PC-3 (cell line): ENCODE measurements at regions of chr1 and their contacts with region 1.

Region 1: GRCh38 chr1:234065794-234066447 is 161.4 kb downstream of the SLC35F3 start:
- DNase-seq: peak; percentile 95
- ATAC-seq: peak; percentile 48
- H3K4me3 ChIP-seq: no peak overlapping the region
- H3K27ac ChIP-seq: peak overlapping the region; percentile 53
- H3K4me1 ChIP-seq: peaks cover 43% of the 10 kb centered on the region
- H3K27me3 ChIP-seq: no peaks in the 10 kb centered on the region
- CTCF ChIP-seq: peak; percentile 95

Region 2: DNA sequence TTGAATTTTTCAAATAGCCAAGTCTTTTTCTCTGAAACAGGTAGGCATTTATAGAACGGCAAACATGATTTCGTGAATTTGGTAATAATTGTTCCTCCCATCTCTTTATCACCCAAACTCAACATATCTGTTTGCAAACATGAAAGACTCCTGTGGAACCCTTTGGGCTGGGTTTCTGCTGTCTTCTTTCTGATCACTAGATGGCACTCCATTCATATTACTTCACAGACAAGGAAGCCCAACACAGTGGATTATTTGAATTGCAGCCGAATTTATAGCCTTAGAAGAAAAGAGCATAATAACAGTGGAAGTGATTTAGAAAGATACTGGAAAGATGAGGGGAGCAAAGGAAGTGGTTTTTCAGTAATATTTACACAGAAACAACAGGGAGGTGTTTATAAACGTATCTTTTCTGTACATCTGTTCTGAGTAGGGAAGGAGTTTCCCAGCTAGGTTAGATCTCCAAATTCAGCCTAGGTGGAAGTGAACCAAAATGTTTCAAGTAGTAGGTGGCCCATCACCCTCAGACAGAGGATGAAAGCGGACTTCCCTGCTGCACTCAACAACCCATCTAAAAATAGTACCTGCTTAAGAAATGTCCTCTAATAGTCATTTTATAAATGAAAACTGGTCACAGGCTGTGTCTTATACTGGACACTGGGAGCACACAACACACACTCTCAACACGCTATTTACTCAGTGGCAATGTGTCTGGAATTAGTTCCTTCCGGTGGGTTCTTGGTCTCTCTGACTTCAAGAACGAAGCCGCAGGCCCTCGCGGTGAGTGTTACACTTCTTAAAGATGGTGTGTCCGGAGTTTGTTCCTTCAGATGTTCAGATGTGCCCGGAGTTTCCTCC is 670.8 kb before region 1 on chr1:
- CTCF ChIA-PET with region 1: no interaction called
- POLR2A ChIA-PET with region 1: no interaction called
- intact Hi-C with region 1: loop called (anchors 1 kb)
- DNase-seq: peak; percentile 90
- ATAC-seq: peak; percentile 97
- H3K4me3 ChIP-seq: no peak overlapping the region
- H3K27ac ChIP-seq: no peak overlapping the region
- H3K4me1 ChIP-seq: 0 out of 2 replicates have a peak, but pooled peaks cover 3% of the 10 kb centered on the region
- H3K27me3 ChIP-seq: no peaks in the 10 kb centered on the region
- CTCF ChIP-seq: peak; percentile 98

Region 3: DNA sequence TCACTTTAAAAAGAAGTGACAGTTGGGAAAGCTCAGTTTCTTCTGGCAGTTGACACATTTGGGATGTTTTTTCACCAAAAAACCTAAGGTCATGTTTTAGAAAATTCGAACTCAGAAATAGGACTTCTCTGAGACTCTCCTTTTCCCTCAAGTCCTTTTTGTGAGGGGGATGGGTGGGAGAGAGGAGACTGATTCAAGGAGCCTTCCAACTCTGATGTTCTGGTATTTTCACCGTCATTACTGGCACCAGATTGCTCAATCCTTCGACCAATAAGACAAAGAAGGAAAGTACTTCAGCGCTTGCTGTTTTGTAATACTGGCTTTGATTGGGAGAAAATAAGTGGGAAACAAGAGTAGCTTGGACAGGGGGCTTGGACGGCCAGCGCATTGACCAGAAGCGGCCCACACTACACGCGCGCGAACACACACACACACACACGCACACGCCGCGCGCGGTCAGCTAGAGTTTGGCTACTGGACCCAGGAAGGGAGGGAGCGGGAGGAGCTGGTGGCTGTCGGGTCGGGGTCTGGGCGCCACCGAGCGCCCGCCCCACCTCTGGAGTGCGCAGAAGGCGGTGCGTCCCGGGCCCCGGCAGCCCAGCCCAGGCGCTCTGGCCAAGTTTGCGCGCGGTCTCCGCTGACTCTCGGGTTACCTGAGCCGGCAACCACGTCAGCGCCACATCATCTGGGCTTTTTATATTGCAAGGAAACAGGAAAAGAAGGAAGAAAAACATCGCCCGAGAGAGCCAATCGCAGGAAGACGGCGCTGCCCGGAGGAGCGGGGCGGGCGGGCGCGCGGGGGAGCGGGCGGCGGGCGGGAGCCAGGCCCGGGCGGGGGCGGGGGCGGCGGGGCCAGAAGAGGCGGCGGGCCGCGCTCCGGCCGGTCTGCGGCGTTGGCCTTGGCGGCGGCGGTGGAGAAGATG is 452.4 kb before region 1 on chr1 and contains the start of gene KCNK1:
- CTCF ChIA-PET with region 1: no interaction called
- POLR2A ChIA-PET with region 1: no interaction called
- intact Hi-C with region 1: loop called (anchors 5 kb)
- DNase-seq: peak; percentile 96
- ATAC-seq: peak; percentile 88
- H3K4me3 ChIP-seq: peak within 1 kb of the TSS; percentile 90
- H3K27ac ChIP-seq: peak within 1 kb of the TSS; percentile 86
- H3K4me1 ChIP-seq: peaks cover 24% of the 10 kb centered on the region
- H3K27me3 ChIP-seq: no peaks in the 10 kb centered on the region
- CTCF ChIP-seq: no peak
- total RNA-seq, gene KCNK1: 31.1 and 34.7 TPM in 2 replicates

Region 4: DNA sequence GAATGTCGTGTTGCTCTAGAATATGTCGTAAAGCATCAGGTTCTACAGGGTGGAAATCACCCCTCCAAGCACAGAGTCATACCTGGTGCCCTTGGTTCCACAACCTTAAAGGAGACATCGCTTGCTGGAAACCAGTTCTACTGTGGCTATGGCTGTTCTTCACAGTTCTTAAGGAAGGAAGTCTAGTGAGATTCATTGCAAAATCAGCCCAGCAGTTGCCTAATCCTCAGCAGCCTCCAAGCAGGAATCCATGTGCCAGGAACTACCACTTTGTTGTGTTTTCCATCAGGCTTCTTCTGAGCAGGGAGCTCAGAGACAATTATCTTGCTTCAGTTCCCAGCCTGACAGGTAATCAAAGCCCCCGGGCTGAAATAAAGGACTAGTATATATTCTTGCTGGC is 206.5 kb before region 1 on chr1:
- CTCF ChIA-PET with region 1: no interaction called
- POLR2A ChIA-PET with region 1: interaction called, 10 read pairs
- intact Hi-C with region 1: no loop called
- DNase-seq: no peak
- ATAC-seq: no peak
- H3K4me3 ChIP-seq: no peak overlapping the region
- H3K27ac ChIP-seq: no peak overlapping the region
- H3K4me1 ChIP-seq: peaks cover 9% of the 10 kb centered on the region; the same call in 1 of the 2 replicates
- H3K27me3 ChIP-seq: no peaks in the 10 kb centered on the region
- CTCF ChIP-seq: no peak

Region 5: DNA sequence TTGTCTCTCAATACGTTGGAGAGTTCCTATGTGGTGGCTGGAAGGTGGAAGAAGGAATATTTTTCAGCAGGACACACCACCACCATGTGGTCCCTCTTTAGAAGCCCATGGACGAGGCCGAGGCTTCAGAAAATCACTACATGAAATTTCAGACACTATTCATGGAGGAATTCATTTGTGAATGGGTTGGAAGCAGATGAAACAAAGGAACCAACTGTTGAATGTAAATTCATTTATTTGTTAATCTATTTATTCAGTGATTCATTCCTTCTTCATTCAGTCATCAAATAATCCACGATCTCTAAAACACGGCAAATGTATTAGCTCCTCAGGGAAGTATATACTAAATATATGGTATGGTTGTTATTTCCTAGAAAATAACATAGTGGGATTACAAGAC is 149.2 kb before region 1 on chr1:
- CTCF ChIA-PET with region 1: interaction called, 6 read pairs
- POLR2A ChIA-PET with region 1: no interaction called
- intact Hi-C with region 1: loop called (anchors 1 kb)
- DNase-seq: peak; percentile 97
- ATAC-seq: peak; percentile 94
- H3K4me3 ChIP-seq: peak overlapping the region; percentile 8; the same call in 1 of the 2 replicates
- H3K27ac ChIP-seq: peak overlapping the region; percentile 88
- H3K4me1 ChIP-seq: peaks cover 31% of the 10 kb centered on the region
- H3K27me3 ChIP-seq: no peaks in the 10 kb centered on the region
- CTCF ChIP-seq: peak; percentile 53; the same call in 1 of the 2 replicates

Region 6: GRCh38 chr1:234047123-234047522 is 18.8 kb before region 1 on chr1:
- CTCF ChIA-PET with region 1: interaction called, 3 read pairs
- POLR2A ChIA-PET with region 1: no interaction called
- intact Hi-C with region 1: loop called (anchors 1 kb)
- DNase-seq: peak; percentile 97
- ATAC-seq: peak; percentile 97
- H3K4me3 ChIP-seq: no peak overlapping the region
- H3K27ac ChIP-seq: peak overlapping the region; percentile 97
- H3K4me1 ChIP-seq: peaks cover 33% of the 10 kb centered on the region
- H3K27me3 ChIP-seq: no peaks in the 10 kb centered on the region
- CTCF ChIP-seq: no peak

Region 7: DNA sequence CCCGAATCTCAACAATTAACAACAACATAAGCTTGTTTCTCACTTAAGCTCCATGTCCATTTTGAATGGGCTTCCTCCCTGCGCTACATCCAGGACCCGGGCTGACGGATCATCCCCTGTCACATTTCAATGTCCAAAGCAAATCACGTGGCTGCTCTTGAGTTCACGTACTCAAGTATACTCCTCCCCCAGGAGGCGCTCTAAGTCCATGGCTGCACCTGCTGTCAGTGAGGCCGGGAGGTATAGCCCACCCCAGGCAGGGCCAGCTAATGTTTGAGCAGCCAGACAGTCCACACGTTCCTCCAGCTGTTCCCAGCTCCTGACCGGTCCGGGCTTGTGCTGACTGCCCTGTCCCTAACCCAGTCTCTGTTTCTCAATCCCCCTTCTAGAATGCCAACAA is 59.4 kb after region 1 on chr1:
- CTCF ChIA-PET with region 1: no interaction called
- POLR2A ChIA-PET with region 1: no interaction called
- intact Hi-C with region 1: no loop called
- DNase-seq: peak; percentile 53
- ATAC-seq: peak; percentile 53; the same call in 1 of the 2 replicates
- H3K4me3 ChIP-seq: no peak overlapping the region
- H3K27ac ChIP-seq: no peak overlapping the region
- H3K4me1 ChIP-seq: no peaks in the 10 kb centered on the region
- H3K27me3 ChIP-seq: no peaks in the 10 kb centered on the region
- CTCF ChIP-seq: peak; percentile 81